GM12878 (cell line): ENCODE measurements at regions of chr19 and their contacts with region 1.

Region 1: DNA sequence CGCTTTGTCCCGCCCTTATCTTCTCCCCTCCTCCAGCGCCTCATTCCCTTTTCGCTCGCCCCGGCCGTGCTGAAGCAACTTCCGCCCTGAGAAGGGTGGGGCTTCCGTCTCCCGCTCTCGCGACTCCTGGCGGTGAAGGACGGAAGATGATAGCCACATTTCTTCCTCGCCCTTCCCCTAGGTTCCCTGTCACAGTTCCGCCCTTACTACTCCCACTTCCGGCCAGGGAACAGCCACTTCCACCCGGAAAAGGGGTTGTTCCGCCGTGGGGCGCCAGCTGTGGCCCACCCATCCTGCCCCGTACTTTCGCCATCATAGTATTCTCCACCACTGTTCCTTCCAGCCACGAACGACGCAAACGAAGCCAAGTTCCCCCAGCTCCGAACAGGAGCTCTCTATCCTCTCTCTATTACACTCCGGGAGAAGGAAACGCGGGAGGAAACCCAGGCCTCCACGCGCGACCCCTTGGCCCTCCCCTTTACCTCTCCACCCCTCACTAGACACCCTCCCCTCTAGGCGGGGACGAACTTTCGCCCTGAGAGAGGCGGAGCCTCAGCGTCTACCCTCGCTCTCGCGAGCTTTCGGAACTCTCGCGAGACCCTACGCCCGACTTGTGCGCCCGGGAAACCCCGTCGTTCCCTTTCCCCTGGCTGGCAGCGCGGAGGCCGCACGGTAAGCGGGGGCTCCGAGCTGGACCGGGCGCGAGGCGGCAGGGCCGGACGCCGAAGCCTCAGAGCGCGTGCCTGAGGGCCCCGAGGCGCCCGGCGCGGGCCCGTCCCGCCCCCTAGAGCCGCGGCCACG is at the start of gene RPS19:
- DNase-seq: peak; percentile 97
- ATAC-seq: peak; percentile 89
- H3K4me3 ChIP-seq: peak within 1 kb of the TSS; percentile 94
- H3K27ac ChIP-seq: peak within 1 kb of the TSS; percentile 98
- H3K4me1 ChIP-seq: peaks cover 24% of the 10 kb centered on the region
- H3K27me3 ChIP-seq: no peaks in the 10 kb centered on the region
- CTCF ChIP-seq: peak in 2 of 3 experiments; percentile 51 to 62; a peak in 4 of 6 replicates
- EP300 ChIP-seq: no peak
- POLR2A ChIP-seq: peak; percentile 99
- RAD21 ChIP-seq: no peak
- polyA plus RNA-seq, gene RPS19: 5,523 to 5,578 TPM

Region 2: DNA sequence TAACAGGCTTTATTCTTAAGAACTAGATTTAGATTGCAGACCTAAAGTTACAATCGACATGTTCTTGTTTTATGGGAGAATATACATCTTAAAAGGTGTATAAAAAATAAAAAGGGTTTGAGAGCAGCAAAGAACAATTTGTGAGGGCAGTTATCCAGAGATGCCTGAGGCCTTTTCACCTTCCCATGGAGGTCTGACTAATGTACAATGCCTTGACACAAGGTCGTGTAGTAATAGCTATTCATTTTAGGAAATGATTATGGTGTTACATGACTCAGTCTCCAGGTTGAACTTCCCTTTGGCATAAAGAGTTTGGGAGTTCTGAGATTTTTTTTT is 84.5 kb before region 1 on chr19:
- CTCF ChIA-PET with region 1: no interaction called
- POLR2A ChIA-PET with region 1: no interaction called
- RAD21 ChIA-PET with region 1: no interaction called
- SMC1A ChIA-PET with region 1: no interaction called
- in situ Hi-C with region 1: no loop called
- intact Hi-C with region 1: no loop called
- DNase-seq: no peak
- ATAC-seq: no peak
- H3K4me3 ChIP-seq: no peak overlapping the region
- H3K27ac ChIP-seq: no peak overlapping the region
- H3K4me1 ChIP-seq: no peaks in the 10 kb centered on the region
- H3K27me3 ChIP-seq: no peaks in the 10 kb centered on the region; a peak in 3 of 4 replicates
- CTCF ChIP-seq: no peak
- EP300 ChIP-seq: no peak
- POLR2A ChIP-seq: no peak
- RAD21 ChIP-seq: no peak

Region 3: DNA sequence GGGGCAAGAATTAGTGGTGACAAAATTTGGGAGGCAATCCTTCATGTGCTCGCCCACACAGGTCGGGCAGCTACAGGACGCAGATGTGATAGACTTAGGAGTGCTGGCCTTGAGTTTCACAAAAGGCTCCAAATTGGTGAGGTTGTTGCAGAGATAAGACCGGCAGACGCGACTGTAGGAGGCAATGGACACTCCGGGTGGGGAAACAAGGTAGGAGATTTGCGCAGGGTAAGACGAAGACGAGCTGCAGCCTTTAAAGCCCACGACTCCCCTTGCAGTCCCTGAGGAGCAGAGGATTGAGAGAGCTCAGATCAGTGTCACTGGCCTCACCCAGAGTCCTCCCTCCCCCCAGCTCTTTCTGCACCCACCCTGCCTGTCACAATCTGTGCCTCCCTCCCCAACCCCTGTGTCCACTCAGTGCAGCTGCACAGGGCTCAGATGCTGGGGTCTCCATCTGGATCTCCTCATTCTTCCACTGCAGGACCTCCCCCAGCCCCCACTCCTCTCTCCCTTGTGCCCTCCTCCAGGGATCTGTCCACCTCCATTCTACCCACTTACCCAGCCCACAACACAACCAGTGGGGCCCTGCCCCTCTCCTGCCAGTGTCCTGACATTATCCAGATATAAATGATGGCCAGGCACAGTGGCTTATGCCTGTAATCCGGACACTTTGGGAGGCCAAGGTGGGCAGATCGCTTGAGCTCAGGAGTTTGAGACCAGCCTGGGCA is 21.7 kb before region 1 on chr19:
- CTCF ChIA-PET with region 1: interaction called, 11 read pairs
- POLR2A ChIA-PET with region 1: no interaction called
- RAD21 ChIA-PET with region 1: no interaction called
- SMC1A ChIA-PET with region 1: no interaction called
- in situ Hi-C with region 1: no loop called
- intact Hi-C with region 1: no loop called
- DNase-seq: no peak
- ATAC-seq: no peak
- H3K4me3 ChIP-seq: no peak overlapping the region
- H3K27ac ChIP-seq: no peak overlapping the region
- H3K4me1 ChIP-seq: no peaks in the 10 kb centered on the region
- H3K27me3 ChIP-seq: peaks cover 2 to 4% of the 10 kb centered on the region in 2 experiments; a peak in 1 of 4 replicates
- CTCF ChIP-seq: no peak
- EP300 ChIP-seq: no peak
- POLR2A ChIP-seq: no peak
- RAD21 ChIP-seq: no peak

Region 4: GRCh38 chr19:41883821-41884733 is 24.3 kb after region 1 on chr19:
- CTCF ChIA-PET with region 1: interaction called, 49 read pairs
- POLR2A ChIA-PET with region 1: interaction called, 25 read pairs
- RAD21 ChIA-PET with region 1: interaction called, 20 read pairs
- SMC1A ChIA-PET with region 1: interaction called, 14 read pairs
- in situ Hi-C with region 1: no loop called
- intact Hi-C with region 1: no loop called
- DNase-seq: peak; percentile 86
- ATAC-seq: peak; percentile 87
- H3K4me3 ChIP-seq: peak overlapping the region; percentile 89
- H3K27ac ChIP-seq: peak overlapping the region; percentile 87
- H3K4me1 ChIP-seq: peaks cover 30% of the 10 kb centered on the region
- H3K27me3 ChIP-seq: no peaks in the 10 kb centered on the region
- CTCF ChIP-seq: 0 out of 6 replicates have a peak, but pooled peaks of 1 of the 3 experiments have one; percentile 7
- EP300 ChIP-seq: no peak; a peak in 1 of 4 replicates
- POLR2A ChIP-seq: peak; percentile 92
- RAD21 ChIP-seq: no peak

Region 5: DNA sequence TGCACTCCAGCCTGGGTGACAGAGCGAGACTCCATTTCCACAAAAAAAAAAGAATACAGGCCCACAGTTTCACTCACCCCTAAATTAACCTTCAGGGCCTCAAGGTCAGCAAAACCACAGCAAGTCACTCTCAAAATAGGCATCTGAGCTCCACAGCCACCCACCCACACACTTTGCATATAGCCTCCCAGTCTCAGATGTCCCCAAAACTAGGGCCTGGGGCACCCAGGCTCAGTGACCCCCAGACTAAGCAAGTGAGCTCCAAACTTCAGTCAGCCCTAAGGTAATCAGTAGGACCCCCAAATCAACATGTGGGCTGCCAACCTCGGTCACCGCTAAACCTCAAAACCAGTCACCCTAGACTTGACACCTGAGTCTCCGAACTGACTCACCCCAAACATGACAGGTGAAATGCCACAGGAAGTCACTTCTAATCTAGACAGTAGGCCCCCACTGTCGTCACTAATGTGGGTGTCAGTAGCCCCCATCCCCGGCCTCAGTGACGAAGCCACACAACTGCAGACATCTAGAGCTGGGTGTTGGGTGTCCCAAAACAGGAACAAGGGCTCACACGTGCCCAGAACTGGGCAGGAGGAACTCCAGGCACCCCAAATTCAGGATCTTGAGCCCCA is 85.4 kb after region 1 on chr19:
- CTCF ChIA-PET with region 1: interaction called, 46 read pairs
- POLR2A ChIA-PET with region 1: interaction called, 14 read pairs
- RAD21 ChIA-PET with region 1: interaction called, 25 read pairs
- SMC1A ChIA-PET with region 1: interaction called, 19 read pairs
- in situ Hi-C with region 1: no loop called
- intact Hi-C with region 1: no loop called
- DNase-seq: peak; percentile 94
- ATAC-seq: peak; percentile 86
- H3K4me3 ChIP-seq: no peak overlapping the region; the same call in 1 of the 2 replicates
- H3K27ac ChIP-seq: peak overlapping the region; percentile 85
- H3K4me1 ChIP-seq: peaks cover 47% of the 10 kb centered on the region
- H3K27me3 ChIP-seq: no peaks in the 10 kb centered on the region
- CTCF ChIP-seq: no peak
- EP300 ChIP-seq: peak; percentile 96 to 98
- POLR2A ChIP-seq: peak; percentile 54
- RAD21 ChIP-seq: peak; percentile 6; the same call in 1 of the 2 replicates

Region 6: GRCh38 chr19:41959056-41960053 is 99.5 kb after region 1 on chr19 and contains the start of gene RABAC1:
- CTCF ChIA-PET with region 1: interaction called, 30 read pairs
- POLR2A ChIA-PET with region 1: interaction called, 20 read pairs
- RAD21 ChIA-PET with region 1: interaction called, 5 read pairs
- SMC1A ChIA-PET with region 1: interaction called, 5 read pairs
- in situ Hi-C with region 1: no loop called
- intact Hi-C with region 1: no loop called
- DNase-seq: peak; percentile 36
- ATAC-seq: peak; percentile 94
- H3K4me3 ChIP-seq: peak within 1 kb of the TSS; percentile 89
- H3K27ac ChIP-seq: peak within 1 kb of the TSS; percentile 72
- H3K4me1 ChIP-seq: peaks cover 12% of the 10 kb centered on the region
- H3K27me3 ChIP-seq: no peaks in the 10 kb centered on the region
- CTCF ChIP-seq: peak; percentile 29 to 57 (median 49); a peak in 5 of 6 replicates
- EP300 ChIP-seq: no peak
- POLR2A ChIP-seq: peak; percentile 60; the same call in 1 of the 2 replicates
- RAD21 ChIP-seq: peak; percentile 14; the same call in 1 of the 2 replicates
- polyA plus RNA-seq, gene RABAC1: 10.9 to 27.3 TPM

Region 7: DNA sequence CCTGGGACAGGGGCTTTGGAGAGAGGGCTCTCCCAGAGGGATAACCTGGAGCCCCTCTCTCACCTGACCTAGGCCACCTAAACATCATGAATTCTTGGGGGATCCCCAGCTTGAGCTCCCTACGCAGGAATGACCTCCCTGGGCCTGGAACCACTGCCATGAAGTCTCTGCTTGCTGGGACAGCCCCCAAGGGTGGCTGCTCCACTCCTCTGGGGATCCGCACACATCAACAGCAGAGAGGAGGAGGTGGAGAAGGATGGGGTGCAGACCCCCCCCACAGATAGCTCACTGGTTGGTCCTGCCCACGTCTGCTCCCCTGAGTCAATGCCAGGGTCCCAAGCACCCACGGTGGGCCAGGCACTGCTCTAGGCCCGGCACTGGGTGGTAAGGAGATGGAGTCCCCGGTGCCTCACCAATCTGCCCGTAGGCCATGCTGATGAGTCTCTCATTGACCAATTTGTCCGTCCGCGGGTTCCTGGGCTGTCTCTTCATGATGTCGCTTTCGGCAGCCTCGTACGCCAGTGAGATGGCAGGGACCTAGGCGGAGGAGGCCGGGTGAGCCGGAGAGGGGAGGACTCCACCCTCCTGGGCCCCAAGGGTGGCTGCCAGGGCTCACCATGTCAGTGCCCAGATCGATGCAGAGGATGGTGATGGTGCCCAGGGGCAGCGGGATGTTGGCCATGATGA is 110.1 kb after region 1 on chr19:
- CTCF ChIA-PET with region 1: no interaction called
- POLR2A ChIA-PET with region 1: no interaction called
- RAD21 ChIA-PET with region 1: no interaction called
- SMC1A ChIA-PET with region 1: no interaction called
- in situ Hi-C with region 1: no loop called
- intact Hi-C with region 1: no loop called
- DNase-seq: no peak
- ATAC-seq: no peak
- H3K4me3 ChIP-seq: no peak overlapping the region
- H3K27ac ChIP-seq: no peak overlapping the region
- H3K4me1 ChIP-seq: no peaks in the 10 kb centered on the region
- H3K27me3 ChIP-seq: no peaks in the 10 kb centered on the region; a peak in 3 of 4 replicates
- CTCF ChIP-seq: no peak
- EP300 ChIP-seq: no peak
- POLR2A ChIP-seq: no peak
- RAD21 ChIP-seq: no peak

Region 8: DNA sequence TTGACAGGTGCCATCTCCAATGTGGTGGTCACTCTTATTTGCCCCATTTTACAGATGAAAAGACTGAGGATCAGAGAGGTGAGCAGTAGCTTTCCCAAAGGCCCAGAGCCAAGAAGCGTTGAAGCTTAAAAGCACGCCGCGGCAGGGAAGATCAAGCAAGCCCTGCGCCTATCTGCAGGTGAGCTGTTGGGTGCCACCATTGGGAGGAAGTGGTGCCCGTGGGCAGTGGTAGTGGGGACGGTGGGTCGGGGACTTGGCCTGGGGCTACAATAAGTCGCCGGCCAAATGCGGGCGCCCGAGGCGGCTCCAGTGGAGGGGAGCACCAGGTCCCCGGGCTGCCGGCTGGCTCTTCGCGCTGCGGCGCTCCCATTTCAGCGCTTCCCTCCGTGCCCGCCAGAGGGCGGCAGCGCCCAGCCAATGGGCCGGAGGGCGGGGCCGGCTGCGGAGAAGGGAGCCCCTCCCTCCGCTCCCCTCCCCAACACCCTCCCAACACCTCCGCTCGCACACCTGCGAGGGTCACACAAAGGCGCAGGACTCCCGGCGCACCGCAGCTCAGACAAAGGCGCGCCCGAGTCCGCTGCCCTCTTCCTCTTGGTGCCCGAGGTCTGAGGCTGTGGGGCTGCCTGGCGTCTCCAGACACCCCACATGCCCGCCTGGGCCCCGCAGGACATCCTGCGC is 273.2 kb after region 1 on chr19:
- CTCF ChIA-PET with region 1: no interaction called
- POLR2A ChIA-PET with region 1: no interaction called
- RAD21 ChIA-PET with region 1: no interaction called
- SMC1A ChIA-PET with region 1: no interaction called
- in situ Hi-C with region 1: no loop called
- intact Hi-C with region 1: no loop called
- DNase-seq: peak; percentile 33
- ATAC-seq: peak; percentile 55
- H3K4me3 ChIP-seq: peak overlapping the region; percentile 99
- H3K27ac ChIP-seq: peak overlapping the region; percentile 99
- H3K4me1 ChIP-seq: peaks cover 27% of the 10 kb centered on the region
- H3K27me3 ChIP-seq: no peaks in the 10 kb centered on the region
- CTCF ChIP-seq: peak; percentile 76 to 99 (median 92); a peak in 5 of 6 replicates
- EP300 ChIP-seq: no peak
- POLR2A ChIP-seq: peak; percentile 61
- RAD21 ChIP-seq: peak; percentile 90